K562 (cell line): ENCODE measurements at regions of chr1 and their contacts with region 1.

Region 1: GRCh38 chr1:182029379-182030331 is 31.9 kb downstream of the ZNF648 start:
- DNase-seq: peak; percentile 97 to 99 (median 98)
- ATAC-seq: peak; percentile 98
- H3K4me3 ChIP-seq: peak overlapping the region; percentile 71
- H3K27ac ChIP-seq: peak overlapping the region; percentile 66
- H3K4me1 ChIP-seq: peaks cover 4 to 6% of the 10 kb centered on the region in 2 experiments; a peak in 3 of 5 replicates
- H3K27me3 ChIP-seq: no peaks in the 10 kb centered on the region
- CTCF ChIP-seq: peak; percentile 46 to 75 (median 56)
- EP300 ChIP-seq: peak; percentile 21; the same call in 1 of the 2 replicates
- POLR2A ChIP-seq: peak; percentile 90
- RAD21 ChIP-seq: peak; percentile 38 to 48; a peak in 3 of 4 replicates

Region 2: GRCh38 chr1:182069028-182069466 is 39.4 kb after region 1 on chr1:
- CTCF ChIA-PET with region 1: no interaction called
- POLR2A ChIA-PET with region 1: no interaction called
- in situ Hi-C with region 1: no loop called
- intact Hi-C with region 1: loop called (anchors 5 kb)
- DNase-seq: peak; percentile 78 to 83 (median 82)
- ATAC-seq: peak; percentile 100
- H3K4me3 ChIP-seq: no peak overlapping the region
- H3K27ac ChIP-seq: no peak overlapping the region
- H3K4me1 ChIP-seq: no peaks in the 10 kb centered on the region; a peak in 1 of 5 replicates
- H3K27me3 ChIP-seq: peaks cover 3 to 15% of the 10 kb centered on the region in 2 experiments; a peak in 4 of 5 replicates
- CTCF ChIP-seq: peak; percentile 84 to 89 (median 87)
- EP300 ChIP-seq: no peak
- POLR2A ChIP-seq: no peak
- RAD21 ChIP-seq: peak in 1 of 2 experiments; percentile 49; a peak in 3 of 4 replicates

Region 3: DNA sequence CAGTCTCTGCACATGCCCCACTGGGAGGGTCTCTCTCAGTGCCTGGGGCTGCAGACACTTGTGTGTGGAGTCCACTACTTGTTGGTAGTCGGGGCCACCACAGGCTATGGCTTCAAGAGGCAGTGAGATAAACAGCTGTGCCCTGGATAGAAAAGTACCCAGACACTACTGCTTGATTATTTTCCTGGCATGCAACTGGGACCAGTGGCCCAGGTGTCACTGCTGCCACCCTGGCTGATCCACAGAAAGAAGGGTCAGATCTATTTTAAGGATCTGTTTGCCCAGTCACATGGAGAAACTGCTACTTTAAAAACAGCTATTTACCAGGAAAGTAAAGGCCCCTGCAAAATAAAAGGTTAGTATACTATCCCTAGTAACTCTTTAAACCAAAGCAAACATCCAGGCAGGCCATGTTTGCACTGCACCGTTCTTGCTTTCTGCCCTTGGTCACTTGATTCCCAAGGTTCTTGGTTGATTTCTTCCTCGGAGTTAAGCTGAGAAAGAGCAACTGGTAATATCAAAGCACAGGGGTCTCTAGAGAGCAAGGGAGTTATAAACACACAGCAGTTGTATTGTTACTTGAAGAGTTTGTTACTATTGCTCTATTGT is 262.0 kb after region 1 on chr1:
- CTCF ChIA-PET with region 1: no interaction called
- POLR2A ChIA-PET with region 1: no interaction called
- in situ Hi-C with region 1: no loop called
- intact Hi-C with region 1: no loop called
- DNase-seq: no peak
- ATAC-seq: no peak
- H3K4me3 ChIP-seq: no peak overlapping the region
- H3K27ac ChIP-seq: peak overlapping the region; percentile 33; the same call in 1 of the 3 replicates
- H3K4me1 ChIP-seq: peaks cover 13 to 49% of the 10 kb centered on the region in 2 experiments
- H3K27me3 ChIP-seq: no peaks in the 10 kb centered on the region
- CTCF ChIP-seq: no peak
- EP300 ChIP-seq: no peak
- POLR2A ChIP-seq: no peak
- RAD21 ChIP-seq: no peak